ENCODE measurements at regions of chr2 and their contacts with region 1.

Region 1: GRCh38 chr2:100707016-100707947 is 112.7 kb upstream of the NPAS2 start:
- DNase-seq: no peak

Region 2: DNA sequence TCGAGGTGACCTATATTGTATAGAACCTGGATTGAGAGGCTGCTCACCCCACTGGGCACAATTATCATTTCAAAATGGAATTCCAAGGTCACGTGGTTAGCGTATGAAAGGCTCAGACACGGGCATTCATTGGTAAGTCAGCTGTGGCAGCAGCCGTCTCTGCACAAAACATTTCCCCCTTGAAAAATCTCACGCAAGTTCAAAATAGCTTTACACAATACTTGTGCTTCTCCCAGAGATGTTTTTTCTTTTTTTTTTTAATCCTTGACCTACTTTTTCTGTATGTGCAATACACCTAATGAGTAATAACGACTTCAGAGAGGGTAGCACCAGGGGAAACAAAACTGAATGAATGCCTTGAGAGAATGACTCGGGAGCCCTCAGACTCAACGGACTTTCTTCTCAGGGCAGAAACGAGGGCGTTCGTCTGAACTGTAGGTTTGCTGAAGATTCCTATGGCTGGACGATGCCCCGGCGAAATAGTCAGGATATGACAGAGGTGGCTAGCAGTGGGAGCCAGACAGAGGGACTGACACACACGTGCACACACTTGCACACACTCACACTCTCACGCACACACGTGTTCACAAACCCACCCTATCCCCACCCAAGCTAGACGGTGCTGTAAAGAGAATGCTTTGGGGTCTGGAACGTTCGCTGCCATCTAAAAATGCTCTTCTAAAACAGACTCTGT is 66.7 kb before region 1 on chr2:
- intact Hi-C with region 1: loop called in 1 of 2 experiments (anchors 1 kb)
- DNase-seq: no peak

Region 3: GRCh38 chr2:100692381-100692780 is 14.9 kb before region 1 on chr2:
- intact Hi-C with region 1: loop called in 1 of 2 experiments (anchors 1 kb)
- DNase-seq: no peak

Region 4: DNA sequence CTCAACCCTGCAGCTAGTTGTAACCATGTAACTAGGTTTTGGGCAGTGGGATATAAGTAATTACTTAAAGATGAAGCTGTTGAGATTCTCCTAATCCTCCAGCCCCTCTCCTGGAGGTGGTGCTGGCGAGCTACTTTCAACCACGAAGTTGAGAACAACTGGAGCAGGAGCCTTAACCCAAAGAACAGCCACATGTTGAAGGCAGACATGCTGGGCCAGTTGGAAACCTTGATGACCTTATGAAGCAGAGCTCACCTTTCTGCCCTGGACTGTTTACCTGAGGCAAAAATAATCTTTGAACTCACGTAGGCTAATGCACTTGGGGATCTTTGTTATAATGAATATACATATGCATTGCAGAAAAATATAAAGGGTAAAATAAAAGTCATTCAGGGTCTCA is 23.1 kb after region 1 on chr2:
- intact Hi-C with region 1: no loop called
- DNase-seq: peak; percentile 86

Region 5: DNA sequence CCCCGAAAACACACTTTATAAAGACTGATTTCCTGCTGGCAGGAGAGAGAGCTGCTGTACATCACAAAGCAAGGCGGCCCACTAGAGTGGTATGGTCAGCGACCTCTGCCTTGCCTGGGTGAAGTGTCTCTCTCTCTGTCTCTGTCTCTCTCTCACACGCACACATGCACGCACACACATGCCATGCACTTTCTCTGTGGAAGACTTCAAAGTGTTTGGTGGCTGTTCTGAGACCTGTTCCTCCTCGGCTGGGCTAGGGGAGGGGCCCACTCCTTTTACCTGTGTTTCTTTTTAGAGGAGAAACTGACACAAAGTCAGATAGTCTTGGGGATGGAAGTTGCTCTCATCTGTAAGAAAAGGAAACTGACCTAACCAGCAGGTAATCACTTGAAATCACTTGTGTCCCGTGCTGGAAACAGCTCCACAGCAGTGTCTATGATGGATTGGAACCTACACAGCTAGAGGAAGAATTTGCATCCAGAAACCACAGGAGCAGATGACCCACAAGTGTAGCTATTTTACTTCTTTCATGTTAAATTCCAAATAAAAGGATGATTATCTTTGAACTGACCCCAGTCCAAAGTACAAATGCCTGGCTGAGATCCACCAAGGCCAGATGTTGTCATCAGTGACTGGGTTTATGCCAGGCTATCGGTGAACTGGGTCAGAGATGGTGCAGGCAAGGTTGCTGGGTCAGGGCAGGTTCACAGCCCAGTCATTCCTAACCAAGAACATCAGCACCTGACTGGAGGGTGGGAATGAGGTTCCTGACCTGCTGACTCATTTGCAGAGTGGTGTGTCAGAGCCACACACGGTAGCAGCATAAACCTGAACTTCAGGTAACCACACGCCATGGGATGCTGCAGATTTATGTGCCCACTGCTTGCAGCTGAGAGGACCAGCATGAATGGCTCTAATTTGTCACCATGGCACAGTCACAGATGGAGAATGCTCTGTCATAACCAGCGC is 175.6 kb after region 1 on chr2:
- intact Hi-C with region 1: no loop called
- DNase-seq: no peak

Measured in posterior vena cava (tissue), 2 donors.